ENCODE measurements at regions of chr10 and their contacts with region 1.

Region 1: DNA sequence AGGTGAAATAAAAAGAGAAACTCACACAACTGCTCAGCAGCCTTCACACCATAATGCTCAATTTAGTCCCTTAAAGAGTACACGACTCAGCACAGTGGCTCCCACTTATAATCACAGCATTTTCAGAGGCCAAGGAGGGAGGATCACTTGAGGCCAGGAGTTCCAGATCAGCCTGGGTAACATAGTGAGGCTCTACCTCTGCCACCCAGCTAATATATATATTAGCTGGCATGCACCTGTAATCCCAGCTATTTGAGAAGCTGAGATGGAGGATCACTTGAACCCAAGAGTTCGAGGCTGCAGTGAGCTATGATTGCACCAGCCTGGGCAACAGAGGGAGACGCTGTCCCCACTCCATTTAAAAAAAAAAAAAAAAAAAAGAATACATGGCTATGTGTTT is 2.2 kb downstream of the ITIH2 start:
- DNase-seq: no peak
- H3K4me3 ChIP-seq: no peak overlapping the region
- H3K27ac ChIP-seq: no peak overlapping the region
- H3K4me1 ChIP-seq: no peaks in the 10 kb centered on the region
- H3K27me3 ChIP-seq: peaks cover 29% of the 10 kb centered on the region
- CTCF ChIP-seq: no peak

Region 2: GRCh38 chr10:6532321-6532720 is 1173.0 kb before region 1 on chr10:
- CTCF ChIA-PET with region 1: no interaction called
- POLR2A ChIA-PET with region 1: interaction called, 10 read pairs
- intact Hi-C with region 1: no loop called
- DNase-seq: no peak
- H3K4me3 ChIP-seq: no peak overlapping the region
- H3K27ac ChIP-seq: no peak overlapping the region
- H3K4me1 ChIP-seq: no peaks in the 10 kb centered on the region
- H3K27me3 ChIP-seq: peaks cover 98% of the 10 kb centered on the region
- CTCF ChIP-seq: no peak

Region 3: GRCh38 chr10:6621536-6621935 is 1083.8 kb before region 1 on chr10:
- CTCF ChIA-PET with region 1: no interaction called
- POLR2A ChIA-PET with region 1: interaction called, 20 read pairs
- intact Hi-C with region 1: no loop called
- DNase-seq: peak; percentile 80
- H3K4me3 ChIP-seq: no peak overlapping the region
- H3K27ac ChIP-seq: no peak overlapping the region
- H3K4me1 ChIP-seq: no peaks in the 10 kb centered on the region
- H3K27me3 ChIP-seq: peaks cover 90% of the 10 kb centered on the region
- CTCF ChIP-seq: no peak

Region 4: GRCh38 chr10:7968510-7969112 is 263.3 kb after region 1 on chr10:
- CTCF ChIA-PET with region 1: no interaction called
- POLR2A ChIA-PET with region 1: no interaction called
- intact Hi-C with region 1: no loop called
- DNase-seq: peak; percentile 19
- H3K4me3 ChIP-seq: no peak overlapping the region
- H3K27ac ChIP-seq: no peak overlapping the region
- H3K4me1 ChIP-seq: no peaks in the 10 kb centered on the region
- H3K27me3 ChIP-seq: no peaks in the 10 kb centered on the region
- CTCF ChIP-seq: no peak